Cardiac septum (tissue), 1 donor: ENCODE measurements at regions of chr1 and their contacts with region 1.

Region 1: GRCh38 chr1:84936116-84936810 is 43.3 kb upstream of the LPAR3 start:
- DNase-seq: no peak

Region 2: DNA sequence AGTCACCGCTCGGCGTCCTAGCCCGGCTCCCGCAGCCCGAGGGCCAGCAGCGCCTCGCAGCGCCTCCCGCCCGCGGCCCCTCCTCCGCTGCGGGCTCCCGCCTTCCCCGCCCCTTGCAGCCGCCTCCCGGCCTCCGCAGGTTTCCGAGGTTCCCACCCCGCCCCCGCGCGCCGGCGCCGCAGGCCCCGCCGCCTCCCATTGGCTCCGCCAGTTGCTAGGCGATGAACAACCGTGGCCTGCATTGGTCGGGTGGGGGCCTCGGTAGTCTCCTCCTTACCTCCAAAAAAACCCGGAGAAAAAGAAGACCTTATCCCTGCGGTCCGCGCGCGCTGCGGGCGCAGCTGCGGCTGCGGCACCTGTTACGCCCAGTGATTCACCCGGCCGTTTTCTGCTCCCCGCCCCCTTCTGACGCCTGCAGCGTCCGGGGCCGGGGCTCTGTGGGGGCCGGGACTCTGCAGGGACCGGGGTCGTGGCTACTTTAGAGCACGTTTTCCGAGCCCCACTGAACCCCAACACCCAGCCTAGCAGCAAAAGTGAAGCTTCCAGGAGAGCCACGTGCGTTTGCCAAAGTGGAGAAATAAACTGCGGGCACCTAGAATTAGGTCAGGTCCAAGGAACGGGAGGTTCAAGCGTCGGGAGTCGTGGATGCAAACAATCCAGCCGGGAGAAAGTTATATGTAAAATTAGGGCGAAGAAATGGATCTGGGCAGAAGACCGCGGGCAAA is 245.7 kb before region 1 on chr1 and contains the start of gene SSX2IP:
- intact Hi-C with region 1: loop called (anchors 10 kb)
- DNase-seq: peak; percentile 98
- total RNA-seq, gene SSX2IP: 12.0 TPM